GM13976 (cell line): ENCODE measurements at regions of chr2 and their contacts with region 1.

Region 1: GRCh38 chr2:133892352-133892913 is 324.2 kb upstream of the NCKAP5 start:
- DNase-seq: no peak
- CTCF ChIP-seq: no peak

Region 2: GRCh38 chr2:134118279-134119116 is 226.1 kb after region 1 on chr2:
- in situ Hi-C with region 1: loop called (anchors 10 kb)
- DNase-seq: peak; percentile 80
- CTCF ChIP-seq: peak; percentile 70

Region 3: GRCh38 chr2:134536296-134536695 is 643.9 kb after region 1 on chr2:
- in situ Hi-C with region 1: no loop called
- DNase-seq: no peak
- CTCF ChIP-seq: no peak

Region 4: GRCh38 chr2:135258193-135258592 is 1365.8 kb after region 1 on chr2:
- in situ Hi-C with region 1: no loop called
- DNase-seq: no peak
- CTCF ChIP-seq: no peak